Activated CD4-positive, alpha-beta T cell treated with anti-CD3 and anti-CD28 coated beads for 36 hours (primary cell): ENCODE measurements at regions of chr2 and their contacts with region 1.

Region 1: DNA sequence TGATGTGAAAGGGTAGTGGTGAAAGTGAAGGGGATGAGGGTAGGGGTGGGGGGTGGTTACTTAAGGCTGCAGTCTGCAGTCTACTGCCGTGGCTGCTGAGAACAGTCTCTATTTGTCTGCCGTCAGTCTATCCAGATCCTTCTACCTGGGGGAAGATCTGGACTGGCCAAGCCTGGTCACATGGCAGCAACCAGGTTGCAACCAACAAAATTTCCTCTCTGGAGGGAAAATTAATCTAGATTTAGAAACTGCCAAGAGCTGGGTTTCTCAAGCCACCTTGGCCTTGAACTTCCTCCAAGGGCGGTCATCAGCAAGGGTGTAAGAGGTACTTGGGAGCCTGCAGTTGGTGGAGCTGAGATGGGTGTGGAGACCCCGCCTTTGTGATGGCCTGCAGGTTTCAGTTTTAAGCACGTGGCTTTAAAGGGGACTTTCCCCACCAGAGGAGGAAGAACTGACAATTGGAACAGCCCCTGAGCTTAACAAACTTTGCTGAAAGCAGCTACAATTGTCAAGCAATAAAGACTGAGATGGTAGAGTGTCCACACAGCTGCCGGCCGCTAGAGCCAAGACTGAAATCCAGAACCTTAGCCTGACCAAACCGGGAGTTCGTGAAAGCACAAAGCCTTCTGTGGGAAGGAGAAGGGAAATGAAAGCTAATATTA is 31.4 kb upstream of the KCMF1 start:
- DNase-seq: peak; percentile 83
- ATAC-seq: peak; percentile 76
- H3K4me3 Mint-ChIP-seq: peak overlapping the region; percentile 67
- H3K27ac Mint-ChIP-seq: peak overlapping the region; percentile 98
- H3K4me1 Mint-ChIP-seq: peaks cover 70% of the 10 kb centered on the region
- H3K27me3 Mint-ChIP-seq: no peaks in the 10 kb centered on the region

Region 2: GRCh38 chr2:84817239-84817655 is 122.3 kb before region 1 on chr2:
- CTCF ChIA-PET with region 1: no interaction called
- POLR2A ChIA-PET with region 1: no interaction called
- intact Hi-C with region 1: loop called in 1 of 2 experiments (anchors 1 kb)
- DNase-seq: peak; percentile 36
- ATAC-seq: peak; percentile 85
- H3K4me3 Mint-ChIP-seq: peak overlapping the region; percentile 20
- H3K27ac Mint-ChIP-seq: no peak overlapping the region
- H3K4me1 Mint-ChIP-seq: peaks cover 52% of the 10 kb centered on the region
- H3K27me3 Mint-ChIP-seq: no peaks in the 10 kb centered on the region

Region 3: GRCh38 chr2:84870306-84870705 is 69.3 kb before region 1 on chr2:
- CTCF ChIA-PET with region 1: interaction called, 3 read pairs
- POLR2A ChIA-PET with region 1: interaction called, 10 read pairs
- intact Hi-C with region 1: no loop called
- DNase-seq: no peak
- ATAC-seq: no peak
- H3K4me3 Mint-ChIP-seq: no peak overlapping the region
- H3K27ac Mint-ChIP-seq: peak overlapping the region; percentile 22
- H3K4me1 Mint-ChIP-seq: peaks cover 79% of the 10 kb centered on the region
- H3K27me3 Mint-ChIP-seq: no peaks in the 10 kb centered on the region

Region 4: DNA sequence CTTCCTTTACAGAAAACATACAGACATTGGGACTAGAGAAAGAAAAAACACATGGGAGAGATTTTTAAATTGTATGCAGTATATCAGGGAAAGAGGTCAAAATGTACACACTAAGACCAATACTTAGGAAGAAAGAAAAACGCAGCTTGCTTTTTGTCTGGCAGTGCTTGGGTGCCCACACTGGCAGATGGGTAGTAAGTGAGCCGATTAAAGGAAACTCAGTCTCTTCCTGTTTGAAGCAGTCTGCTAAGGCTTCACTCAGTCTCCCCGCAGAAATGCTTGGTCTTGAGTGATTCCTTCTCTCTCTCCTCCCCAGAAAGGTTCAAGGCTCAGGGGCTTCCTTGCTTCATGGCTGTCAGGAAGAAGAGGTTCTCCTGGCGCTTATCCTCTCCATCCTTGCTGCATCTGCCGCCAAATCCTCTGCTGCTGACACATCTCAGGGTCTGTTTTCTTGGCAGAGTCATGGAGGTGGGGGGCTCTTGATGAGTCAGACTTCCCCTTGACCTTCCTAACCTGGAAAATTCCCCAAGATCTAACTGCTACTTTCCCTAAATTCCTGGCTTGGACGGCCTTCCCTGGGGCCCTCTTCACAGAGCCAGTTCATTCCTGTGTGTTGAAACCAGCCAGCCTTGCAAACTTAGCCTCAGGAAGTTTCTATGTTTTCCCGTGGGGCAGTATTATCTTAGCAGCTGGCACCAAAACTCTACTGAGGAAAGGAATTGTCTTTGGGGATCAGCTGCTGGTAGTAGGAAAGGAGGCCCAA is 44.6 kb before region 1 on chr2:
- CTCF ChIA-PET with region 1: interaction called, 4 read pairs
- POLR2A ChIA-PET with region 1: no interaction called
- intact Hi-C with region 1: loop called in 1 of 2 experiments (anchors 5 kb)
- DNase-seq: peak; percentile 39
- ATAC-seq: peak; percentile 35
- H3K4me3 Mint-ChIP-seq: peak overlapping the region; percentile 13
- H3K27ac Mint-ChIP-seq: peak overlapping the region; percentile 68
- H3K4me1 Mint-ChIP-seq: peaks cover 63% of the 10 kb centered on the region
- H3K27me3 Mint-ChIP-seq: no peaks in the 10 kb centered on the region

Region 5: DNA sequence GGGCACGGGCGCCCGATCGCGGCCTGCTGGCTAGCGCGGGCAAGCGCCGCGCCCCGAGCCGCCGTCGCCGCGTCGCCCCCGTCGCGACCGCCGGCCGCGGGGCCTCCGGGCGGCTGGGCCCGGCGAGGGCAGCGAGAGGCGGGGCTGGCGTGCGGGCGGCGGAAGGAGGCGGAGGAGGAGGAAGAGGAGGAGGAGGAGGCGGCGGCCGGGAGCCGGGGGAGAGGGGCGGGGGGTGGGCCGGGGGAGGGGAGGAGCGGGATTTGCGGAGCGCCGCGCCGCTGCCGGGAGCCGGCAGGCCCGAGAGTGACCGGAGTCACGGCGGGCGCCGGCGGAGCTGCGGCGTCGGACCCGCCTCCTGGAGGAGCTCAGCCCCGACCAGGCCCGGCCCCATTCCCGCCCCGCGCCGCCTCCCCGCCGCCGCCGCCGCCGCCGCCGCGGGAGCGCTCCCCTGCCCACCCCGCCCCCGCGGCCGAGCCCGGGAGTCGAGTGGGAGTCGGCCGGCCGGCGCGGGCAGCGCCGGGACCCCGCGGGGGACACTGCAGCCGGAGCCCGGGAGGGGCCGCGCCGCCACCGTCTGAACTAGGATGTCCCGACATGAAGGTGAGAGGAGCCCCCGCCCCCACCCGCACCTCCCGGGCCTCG is 31.4 kb after region 1 on chr2 and contains the start of gene KCMF1:
- CTCF ChIA-PET with region 1: interaction called, 6 read pairs
- POLR2A ChIA-PET with region 1: interaction called, 7 read pairs
- intact Hi-C with region 1: loop called (anchors 1 kb)
- DNase-seq: peak; percentile 83
- ATAC-seq: peak; percentile 69
- H3K4me3 Mint-ChIP-seq: peak within 1 kb of the TSS; percentile 98
- H3K27ac Mint-ChIP-seq: peak within 1 kb of the TSS; percentile 100
- H3K4me1 Mint-ChIP-seq: peaks cover 38% of the 10 kb centered on the region
- H3K27me3 Mint-ChIP-seq: no peaks in the 10 kb centered on the region
- total RNA-seq, gene KCMF1: 78.1 to 98.5 TPM

Region 6: DNA sequence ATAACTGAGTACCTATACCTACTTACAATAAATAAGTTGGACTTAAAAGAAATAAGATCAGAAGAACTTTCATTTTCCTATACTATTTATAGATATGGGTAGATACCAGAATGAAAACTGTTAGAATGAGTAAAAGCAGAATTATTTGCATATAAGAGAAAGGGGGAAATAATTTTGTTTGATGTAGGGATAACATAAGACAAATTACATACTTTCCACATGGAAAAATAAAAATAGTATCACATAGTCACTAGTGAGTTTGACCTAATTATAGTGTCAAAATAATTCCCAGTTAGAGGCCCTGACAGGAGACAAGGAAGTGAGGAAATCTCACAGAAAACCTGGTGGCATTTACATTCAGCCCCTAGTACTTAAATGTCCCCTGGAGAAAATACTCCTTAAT is 60.0 kb after region 1 on chr2:
- CTCF ChIA-PET with region 1: interaction called, 6 read pairs
- POLR2A ChIA-PET with region 1: interaction called, 5 read pairs
- intact Hi-C with region 1: loop called (anchors 1 to 2 kb)
- DNase-seq: no peak
- ATAC-seq: peak; percentile 31
- H3K4me3 Mint-ChIP-seq: peak overlapping the region; percentile 45
- H3K27ac Mint-ChIP-seq: peak overlapping the region; percentile 96
- H3K4me1 Mint-ChIP-seq: peaks cover 80% of the 10 kb centered on the region
- H3K27me3 Mint-ChIP-seq: no peaks in the 10 kb centered on the region

Region 7: GRCh38 chr2:85017411-85018048 is 78.0 kb after region 1 on chr2:
- CTCF ChIA-PET with region 1: interaction called, 9 read pairs
- POLR2A ChIA-PET with region 1: interaction called, 11 read pairs
- intact Hi-C with region 1: loop called in 1 of 2 experiments (anchors 2 kb)
- DNase-seq: no peak
- ATAC-seq: peak; percentile 2
- H3K4me3 Mint-ChIP-seq: no peak overlapping the region
- H3K27ac Mint-ChIP-seq: peak overlapping the region; percentile 61
- H3K4me1 Mint-ChIP-seq: peaks cover 76% of the 10 kb centered on the region
- H3K27me3 Mint-ChIP-seq: no peaks in the 10 kb centered on the region